Ascending aorta (tissue), 2 donors: ENCODE measurements at regions of chr1 and their contacts with region 1.

Region 1: GRCh38 chr1:156193488-156194299 is at the start of gene SLC25A44:
- DNase-seq: peak; percentile 86 to 99
- H3K4me3 ChIP-seq: peak within 1 kb of the TSS; percentile 70 to 97
- H3K27ac ChIP-seq: peak within 1 kb of the TSS; percentile 82 to 87
- H3K4me1 ChIP-seq: peaks cover 7 to 9% of the 10 kb centered on the region in 2 donors
- H3K27me3 ChIP-seq: no peaks in the 10 kb centered on the region
- CTCF ChIP-seq: peak; percentile 28 to 44 (median 44)
- total RNA-seq, gene SLC25A44: 13.5 TPM

Region 2: DNA sequence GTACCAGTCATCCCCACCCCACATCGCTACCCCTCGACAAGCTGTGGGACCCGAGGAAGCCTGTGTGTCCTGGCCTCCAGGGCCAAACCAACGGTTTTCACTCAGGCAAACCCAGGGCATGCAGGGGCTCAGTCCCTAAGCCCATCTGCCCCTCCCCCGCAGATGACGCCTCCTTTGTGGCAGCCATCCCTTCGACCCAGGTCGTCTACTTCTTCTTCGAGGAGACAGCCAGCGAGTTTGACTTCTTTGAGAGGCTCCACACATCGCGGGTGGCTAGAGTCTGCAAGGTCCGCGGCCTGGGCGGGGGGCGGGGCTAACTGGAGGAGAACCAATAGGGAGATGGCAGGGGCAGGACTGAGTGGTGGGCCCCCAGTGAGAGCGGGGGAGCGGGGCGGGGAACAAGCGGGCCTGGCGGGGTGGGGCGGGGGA is 32.9 kb before region 1 on chr1:
- intact Hi-C with region 1: loop called (anchors 1 kb)
- DNase-seq: peak; percentile 71 to 94
- H3K4me3 ChIP-seq: peak overlapping the region; percentile 57 to 77
- H3K27ac ChIP-seq: peak overlapping the region; percentile 75 to 86
- H3K4me1 ChIP-seq: peaks cover 0 to 7% of the 10 kb centered on the region in 2 donors
- H3K27me3 ChIP-seq: no peaks in the 10 kb centered on the region
- CTCF ChIP-seq: no peak

Region 3: DNA sequence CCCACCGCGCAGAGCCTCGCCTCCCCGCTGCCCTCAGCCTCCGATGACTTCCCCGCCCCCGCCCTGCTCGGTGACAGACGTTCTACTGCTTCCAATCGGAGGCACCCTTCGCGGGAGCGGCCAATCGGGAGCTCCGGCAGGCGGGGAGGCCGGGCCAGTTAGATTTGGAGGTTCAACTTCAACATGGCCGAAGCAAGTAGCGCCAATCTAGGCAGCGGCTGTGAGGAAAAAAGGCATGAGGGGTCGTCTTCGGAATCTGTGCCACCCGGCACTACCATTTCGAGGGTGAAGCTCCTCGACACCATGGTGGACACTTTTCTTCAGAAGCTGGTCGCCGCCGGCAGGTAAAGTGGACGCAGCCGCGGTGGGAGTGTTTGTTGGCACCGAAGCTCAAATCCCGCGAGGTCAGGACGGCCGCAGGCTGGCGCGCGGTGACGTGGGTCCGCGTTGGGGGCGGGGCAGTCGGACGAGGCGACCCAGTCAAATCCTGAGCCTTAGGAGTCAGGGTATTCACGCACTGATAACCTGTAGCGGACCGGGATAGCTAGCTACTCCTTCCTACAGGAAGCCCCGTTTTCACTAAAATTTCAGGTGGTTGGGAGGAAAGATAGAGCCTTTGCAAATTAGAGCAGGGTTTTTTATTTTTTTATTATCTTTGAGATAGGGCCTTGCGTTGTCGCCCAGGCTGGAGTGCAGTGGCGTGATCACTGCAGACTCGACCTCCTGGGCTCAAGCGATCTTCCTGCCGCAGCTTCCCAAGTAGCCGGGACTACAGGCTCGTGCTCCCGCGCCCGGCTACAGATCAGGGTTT is 19.3 kb after region 1 on chr1 and contains the start of gene PMF1:
- intact Hi-C with region 1: loop called (anchors 1 kb)
- DNase-seq: peak; percentile 93 to 99
- H3K4me3 ChIP-seq: peak within 1 kb of the TSS; percentile 74 to 82
- H3K27ac ChIP-seq: peak within 1 kb of the TSS; percentile 89 to 96
- H3K4me1 ChIP-seq: peaks cover 5 to 24% of the 10 kb centered on the region in 2 donors
- H3K27me3 ChIP-seq: no peaks in the 10 kb centered on the region
- CTCF ChIP-seq: no peak
- total RNA-seq, gene PMF1: 61.4 TPM